CD4-positive, alpha-beta T cell (primary cell): ENCODE measurements at regions of chr3 and their contacts with region 1.

Region 1: DNA sequence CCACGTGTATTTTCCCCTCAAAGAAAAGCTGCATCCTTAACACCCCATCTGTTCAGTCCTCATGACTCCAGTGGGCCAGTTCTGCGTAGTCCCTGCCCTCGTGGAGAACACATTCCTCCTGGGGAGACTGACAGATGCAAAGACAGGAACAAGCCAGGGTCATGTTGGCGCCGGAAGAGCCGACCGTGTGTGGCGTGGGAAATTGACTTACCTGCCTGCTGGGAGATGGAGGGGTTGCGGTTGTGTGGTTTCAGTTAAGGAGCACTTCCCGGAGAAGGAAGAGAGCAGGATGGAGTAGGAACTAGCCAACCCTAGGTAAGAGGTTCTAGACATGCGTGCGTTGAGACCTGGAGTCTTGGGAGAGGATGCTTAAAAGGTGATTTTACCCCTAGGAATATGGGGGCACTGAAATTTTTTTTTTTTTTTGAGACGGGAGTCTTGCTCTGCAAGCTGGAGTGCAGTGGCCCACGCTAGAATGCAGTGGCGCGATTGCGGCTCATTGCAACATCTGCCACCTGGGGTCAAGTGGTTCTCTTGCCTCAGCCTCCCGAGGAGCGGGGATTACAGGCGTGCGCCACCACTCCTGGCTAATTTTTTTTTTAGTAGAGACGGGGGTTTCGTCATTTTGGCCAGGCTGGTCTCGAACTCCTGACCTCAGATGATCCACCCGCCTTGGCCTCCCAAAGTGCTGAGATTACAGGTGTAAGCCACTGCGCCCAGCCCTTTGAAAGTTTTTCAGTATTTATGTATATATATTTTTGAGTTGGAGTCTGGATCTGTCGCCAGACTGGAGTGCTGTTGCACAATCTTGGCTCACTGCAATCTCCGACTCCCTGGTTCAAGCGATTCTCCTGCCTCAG is 1.4 kb downstream of the VHL start:
- DNase-seq: peak in 5 of 14 experiments; percentile 1 to 54 (median 42)
- ATAC-seq: no peak
- H3K4me3 ChIP-seq: peak overlapping the region; percentile 85
- H3K4me3 Mint-ChIP-seq: peak overlapping the region; percentile 90
- H3K27ac ChIP-seq: peak overlapping the region in 1 of 2 donors; percentile 22
- H3K27ac Mint-ChIP-seq: peak overlapping the region; percentile 85
- H3K4me1 ChIP-seq: peaks cover 54% of the 10 kb centered on the region
- H3K4me1 Mint-ChIP-seq: peaks cover 40% of the 10 kb centered on the region
- H3K27me3 ChIP-seq: no peaks in the 10 kb centered on the region
- H3K27me3 Mint-ChIP-seq: no peaks in the 10 kb centered on the region
- CTCF ChIP-seq: no peak

Region 2: DNA sequence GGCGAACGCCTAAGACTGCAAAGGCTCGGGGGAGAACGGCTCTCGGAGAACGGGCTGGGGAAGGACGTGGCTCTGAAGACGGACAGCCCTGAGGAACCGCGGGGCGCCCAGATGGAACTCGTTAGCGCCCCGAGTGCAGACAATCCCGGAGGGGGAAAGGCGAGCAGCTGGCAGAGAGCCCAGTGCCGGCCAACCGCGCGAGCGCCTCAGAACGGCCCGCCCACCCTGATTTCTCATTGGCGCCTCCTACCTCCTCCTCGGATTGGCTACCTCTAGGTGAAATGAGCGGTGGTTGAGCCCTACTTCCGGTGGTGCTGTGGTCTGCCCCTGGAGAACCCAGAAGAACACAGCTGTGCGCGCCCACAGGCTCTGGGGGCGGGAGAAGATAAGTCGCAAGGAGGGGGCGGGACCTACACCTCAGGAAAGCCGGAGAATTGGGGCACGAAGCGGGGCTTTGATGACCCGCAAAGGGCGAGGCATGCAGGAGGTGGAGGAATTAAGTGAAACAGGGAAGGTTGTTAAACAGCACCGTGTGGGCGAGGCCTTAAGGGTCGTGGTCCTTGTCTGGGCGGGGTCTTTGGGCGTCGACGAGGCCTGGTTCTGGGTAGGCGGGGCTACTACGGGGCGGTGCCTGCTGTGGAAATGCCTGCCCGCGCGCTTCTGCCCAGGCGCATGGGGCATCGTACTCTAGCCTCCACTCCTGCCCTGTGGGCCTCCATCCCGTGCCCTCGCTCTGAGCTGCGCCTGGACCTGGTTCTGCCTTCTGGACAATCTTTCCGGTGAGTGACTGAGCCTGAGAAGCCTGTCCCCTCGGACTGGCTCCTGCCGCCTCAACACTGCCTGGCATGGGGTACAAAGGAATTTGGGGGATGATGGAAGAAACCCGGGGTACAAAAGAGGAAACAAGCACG is 393.0 kb before region 1 on chr3 and contains the start of gene OGG1:
- CTCF ChIA-PET with region 1: no interaction called
- POLR2A ChIA-PET with region 1: no interaction called
- intact Hi-C with region 1: no loop called
- DNase-seq: peak; percentile 84 to 98 (median 91)
- ATAC-seq: peak; percentile 94
- H3K4me3 ChIP-seq: peak within 1 kb of the TSS; percentile 82
- H3K4me3 Mint-ChIP-seq: peak within 1 kb of the TSS; percentile 95
- H3K27ac ChIP-seq: peak within 1 kb of the TSS; percentile 69 to 74
- H3K27ac Mint-ChIP-seq: peak within 1 kb of the TSS; percentile 85
- H3K4me1 ChIP-seq: peaks cover 37% of the 10 kb centered on the region
- H3K4me1 Mint-ChIP-seq: peaks cover 48% of the 10 kb centered on the region
- H3K27me3 ChIP-seq: no peaks in the 10 kb centered on the region
- H3K27me3 Mint-ChIP-seq: no peaks in the 10 kb centered on the region
- CTCF ChIP-seq: no peak
- total RNA-seq, gene OGG1: 7.1 to 8.9 TPM

Region 3: GRCh38 chr3:10115326-10116137 is 27.4 kb before region 1 on chr3 and contains the start of gene BRK1:
- CTCF ChIA-PET with region 1: no interaction called
- POLR2A ChIA-PET with region 1: interaction called, 4 read pairs
- intact Hi-C with region 1: loop called in 1 of 2 experiments (anchors 1 kb)
- DNase-seq: peak; percentile 83 to 98 (median 92)
- ATAC-seq: peak; percentile 97
- H3K4me3 ChIP-seq: peak within 1 kb of the TSS; percentile 98
- H3K4me3 Mint-ChIP-seq: peak within 1 kb of the TSS; percentile 95
- H3K27ac ChIP-seq: peak within 1 kb of the TSS; percentile 64 to 74
- H3K27ac Mint-ChIP-seq: peak within 1 kb of the TSS; percentile 88
- H3K4me1 ChIP-seq: peaks cover 41% of the 10 kb centered on the region
- H3K4me1 Mint-ChIP-seq: peaks cover 36% of the 10 kb centered on the region
- H3K27me3 ChIP-seq: no peaks in the 10 kb centered on the region
- H3K27me3 Mint-ChIP-seq: no peaks in the 10 kb centered on the region
- CTCF ChIP-seq: no peak
- total RNA-seq, gene BRK1: 33.1 to 33.8 TPM

Region 4: DNA sequence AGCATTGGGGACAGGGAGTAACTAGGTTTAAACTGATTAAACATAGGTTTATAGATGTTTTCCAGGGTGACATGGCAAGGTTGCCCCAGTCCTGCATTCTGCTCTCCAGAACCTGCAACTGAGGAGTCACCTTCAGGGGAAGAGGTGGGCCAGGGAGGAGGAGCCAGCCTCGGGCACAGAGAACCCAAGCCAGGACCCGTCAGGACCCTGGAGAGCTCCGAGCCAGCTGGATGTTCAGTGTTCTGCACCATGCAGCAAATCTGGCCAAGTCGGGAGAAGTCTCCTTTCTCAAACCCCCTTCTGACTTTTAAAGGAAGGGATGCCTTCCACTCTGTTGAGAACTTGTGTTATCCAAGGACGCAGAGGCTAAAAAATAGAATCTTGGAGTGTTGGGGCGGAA is 611.0 kb after region 1 on chr3:
- CTCF ChIA-PET with region 1: no interaction called
- POLR2A ChIA-PET with region 1: no interaction called
- intact Hi-C with region 1: no loop called
- DNase-seq: peak in 12 of 14 experiments; percentile 4 to 50 (median 18)
- ATAC-seq: no peak
- H3K4me3 ChIP-seq: no peak overlapping the region
- H3K4me3 Mint-ChIP-seq: no peak overlapping the region
- H3K27ac ChIP-seq: no peak overlapping the region
- H3K27ac Mint-ChIP-seq: no peak overlapping the region
- H3K4me1 ChIP-seq: no peaks in the 10 kb centered on the region
- H3K4me1 Mint-ChIP-seq: no peaks in the 10 kb centered on the region
- H3K27me3 ChIP-seq: peaks cover 12 to 20% of the 10 kb centered on the region in 2 experiments
- H3K27me3 Mint-ChIP-seq: peaks cover 48% of the 10 kb centered on the region
- CTCF ChIP-seq: no peak